ENCODE measurements at regions of chr21 and their contacts with region 1.

Region 1: GRCh38 chr21:36661511-36662309 is 37.2 kb upstream of the SIM2 start:
- DNase-seq: peak; percentile 75
- ATAC-seq: peak; percentile 76
- H3K4me3 ChIP-seq: no peak overlapping the region
- H3K27ac ChIP-seq: peak overlapping the region; percentile 19; the same call in 1 of the 2 replicates
- H3K4me1 ChIP-seq: peaks cover 15% of the 10 kb centered on the region
- H3K27me3 ChIP-seq: no peaks in the 10 kb centered on the region
- CTCF ChIP-seq: peak; percentile 88

Region 2: GRCh38 chr21:36461606-36462486 is 199.9 kb before region 1 on chr21:
- CTCF ChIA-PET with region 1: no interaction called
- POLR2A ChIA-PET with region 1: no interaction called
- intact Hi-C with region 1: no loop called
- DNase-seq: peak; percentile 58
- ATAC-seq: peak; percentile 28
- H3K4me3 ChIP-seq: no peak overlapping the region
- H3K27ac ChIP-seq: peak overlapping the region; percentile 68
- H3K4me1 ChIP-seq: peaks cover 49% of the 10 kb centered on the region
- H3K27me3 ChIP-seq: no peaks in the 10 kb centered on the region
- CTCF ChIP-seq: no peak

Region 3: DNA sequence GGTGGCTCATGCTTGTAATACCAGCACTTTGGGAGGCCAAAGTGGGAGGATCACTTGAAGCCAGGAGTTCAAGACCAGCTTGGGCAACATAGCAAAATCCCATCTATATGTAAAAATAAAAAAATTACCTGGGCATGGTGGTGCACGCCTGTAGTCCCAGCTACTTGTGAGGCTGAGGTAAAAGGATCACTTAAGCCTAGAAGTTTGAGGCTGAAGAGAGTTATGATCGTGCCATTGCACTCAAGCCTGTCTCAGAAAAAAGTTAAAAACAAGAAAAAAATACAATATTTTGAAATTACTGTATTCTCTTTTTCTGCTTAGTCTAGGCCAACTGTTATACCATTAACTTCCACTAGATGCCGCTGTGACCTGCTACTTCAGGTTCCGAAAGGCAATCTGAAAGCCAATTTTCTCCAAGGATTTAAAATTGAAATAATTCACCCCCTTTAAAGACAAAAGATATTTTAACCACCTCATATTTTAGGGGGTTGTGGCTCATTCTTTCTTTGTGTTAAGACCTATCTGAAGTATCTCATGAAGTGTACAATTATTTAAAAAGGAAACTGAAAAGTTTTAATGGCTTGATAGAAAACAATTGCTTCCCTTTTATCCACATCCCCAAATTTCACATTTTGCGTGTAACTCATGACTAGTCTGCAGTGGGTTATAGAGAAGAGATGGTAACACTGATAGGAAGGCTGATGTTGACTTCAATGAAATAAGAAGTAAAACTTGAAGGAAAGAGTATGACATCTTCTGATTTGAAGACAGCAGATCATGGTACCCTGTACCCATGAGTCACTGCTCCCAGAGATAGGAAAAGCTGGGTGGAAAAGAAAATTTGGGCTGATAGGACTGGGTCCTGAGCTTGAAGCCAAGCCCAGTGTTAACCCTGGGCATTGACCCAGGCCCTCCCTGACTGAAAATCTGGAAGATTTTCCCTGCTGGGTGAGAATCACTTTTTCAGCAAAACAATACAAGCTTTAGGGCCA is 157.3 kb before region 1 on chr21:
- CTCF ChIA-PET with region 1: interaction called, 3 read pairs
- POLR2A ChIA-PET with region 1: no interaction called
- intact Hi-C with region 1: loop called (anchors 10 kb)
- DNase-seq: peak; percentile 78
- ATAC-seq: no peak
- H3K4me3 ChIP-seq: no peak overlapping the region
- H3K27ac ChIP-seq: no peak overlapping the region
- H3K4me1 ChIP-seq: peaks cover 46% of the 10 kb centered on the region
- H3K27me3 ChIP-seq: no peaks in the 10 kb centered on the region
- CTCF ChIP-seq: peak; percentile 92

Region 4: GRCh38 chr21:36676039-36676950 is 14.6 kb after region 1 on chr21:
- CTCF ChIA-PET with region 1: no interaction called
- POLR2A ChIA-PET with region 1: no interaction called
- intact Hi-C with region 1: loop called (anchors 2 kb)
- DNase-seq: peak; percentile 92
- ATAC-seq: peak; percentile 83
- H3K4me3 ChIP-seq: peak overlapping the region; percentile 16; the same call in 1 of the 2 replicates
- H3K27ac ChIP-seq: peak overlapping the region; percentile 81
- H3K4me1 ChIP-seq: peaks cover 51% of the 10 kb centered on the region
- H3K27me3 ChIP-seq: no peaks in the 10 kb centered on the region
- CTCF ChIP-seq: no peak

Region 5: DNA sequence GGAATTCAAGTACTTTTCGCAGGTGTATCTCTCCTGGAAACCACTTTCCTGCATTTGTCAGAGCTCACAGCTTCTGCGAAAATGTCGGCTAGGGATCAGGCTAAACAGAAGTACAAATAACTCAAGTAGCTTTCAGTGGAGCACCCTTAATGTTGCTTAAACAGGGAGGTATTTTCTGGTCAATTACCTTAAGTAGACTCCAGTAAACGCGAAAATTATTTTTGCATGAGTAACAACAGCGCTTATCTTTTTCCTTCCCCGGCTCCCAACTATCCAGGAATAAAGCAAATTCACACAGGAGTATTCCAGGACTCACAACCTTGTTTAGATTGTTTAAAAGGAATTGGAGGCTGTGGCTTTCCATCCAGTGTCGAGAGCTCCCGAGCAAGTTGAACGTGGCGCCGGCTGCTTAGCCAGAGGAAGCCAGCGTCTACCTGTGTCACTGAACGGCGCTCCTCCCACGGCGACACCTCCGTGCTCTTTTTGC is 29.9 kb after region 1 on chr21:
- CTCF ChIA-PET with region 1: no interaction called
- POLR2A ChIA-PET with region 1: no interaction called
- intact Hi-C with region 1: no loop called
- DNase-seq: no peak
- ATAC-seq: no peak
- H3K4me3 ChIP-seq: no peak overlapping the region
- H3K27ac ChIP-seq: peak overlapping the region; percentile 31; the same call in 1 of the 2 replicates
- H3K4me1 ChIP-seq: peaks cover 14% of the 10 kb centered on the region; the same call in 1 of the 2 replicates
- H3K27me3 ChIP-seq: no peaks in the 10 kb centered on the region
- CTCF ChIP-seq: no peak

Region 6: DNA sequence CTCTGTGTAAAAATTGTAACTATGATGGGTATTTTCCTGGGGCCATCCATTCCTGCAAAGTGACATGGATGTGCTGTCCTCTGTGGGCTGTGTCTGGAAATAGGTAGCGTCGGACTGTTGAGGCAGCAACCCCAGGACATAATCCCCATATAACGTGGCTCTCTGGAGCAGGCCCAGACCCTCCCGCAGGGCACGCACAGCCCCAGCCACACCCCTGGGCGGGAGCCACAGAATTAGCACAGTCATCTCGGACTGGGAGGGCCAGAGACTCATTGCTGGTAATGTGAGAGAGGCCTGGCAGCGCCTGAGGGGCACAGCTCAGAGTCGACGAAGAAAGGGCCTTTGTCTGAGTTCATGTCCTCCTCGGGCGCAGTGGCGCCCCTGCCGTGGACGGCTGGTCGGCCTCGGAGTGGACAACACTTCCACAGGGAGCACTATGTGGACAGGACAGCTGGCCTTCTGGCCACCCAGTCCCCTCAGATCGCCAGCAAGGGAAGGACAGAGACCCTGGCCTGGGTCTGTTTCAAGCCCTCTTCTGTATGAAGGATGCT is 57.3 kb after region 1 on chr21:
- CTCF ChIA-PET with region 1: interaction called, 3 read pairs
- POLR2A ChIA-PET with region 1: no interaction called
- intact Hi-C with region 1: loop called (anchors 5 kb)
- DNase-seq: peak; percentile 95
- ATAC-seq: peak; percentile 89
- H3K4me3 ChIP-seq: no peak overlapping the region
- H3K27ac ChIP-seq: peak overlapping the region; percentile 83
- H3K4me1 ChIP-seq: peaks cover 16% of the 10 kb centered on the region
- H3K27me3 ChIP-seq: no peaks in the 10 kb centered on the region
- CTCF ChIP-seq: peak; percentile 46; the same call in 1 of the 2 replicates